ENCODE measurements at regions of chr17 and their contacts with region 1.

Region 1: DNA sequence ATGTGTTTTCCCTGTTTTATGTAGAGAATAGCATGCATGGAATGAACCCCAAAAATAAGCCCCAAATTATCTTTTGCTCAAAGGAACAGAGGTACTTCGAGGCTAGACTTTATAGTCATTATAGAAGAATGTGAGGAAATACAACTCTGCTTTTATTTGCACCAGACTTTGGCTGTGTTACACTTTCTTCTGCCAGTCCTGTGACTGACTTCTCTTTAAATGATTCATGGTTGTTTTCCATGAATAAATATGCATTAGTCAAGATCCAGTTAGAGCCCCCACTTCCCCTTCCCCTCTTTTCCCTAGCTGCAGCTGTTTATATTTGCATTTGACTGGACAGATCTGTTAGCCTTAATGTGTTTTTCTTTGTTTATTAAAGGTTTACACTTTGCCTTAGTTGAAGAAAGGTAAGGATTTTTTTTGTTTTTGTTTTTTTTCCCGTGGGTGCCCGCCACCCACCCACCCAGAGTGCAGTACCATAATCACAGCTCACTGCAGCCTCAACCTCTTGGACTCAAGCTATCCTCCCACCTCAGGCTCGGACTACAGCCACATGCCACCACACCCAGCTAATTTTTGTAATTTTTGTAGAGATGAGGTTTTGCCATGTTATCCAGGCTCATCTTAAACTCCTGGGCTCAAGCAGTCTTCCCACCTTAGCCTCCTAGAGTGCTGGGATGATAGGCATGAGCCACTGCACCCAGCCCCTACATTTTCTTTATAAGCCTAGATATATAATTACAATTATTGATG is 152.6 kb downstream of the CYB561 start:
- DNase-seq: peak; percentile 83
- ATAC-seq: peak; percentile 84
- H3K4me3 ChIP-seq: no peak overlapping the region
- H3K27ac ChIP-seq: peak overlapping the region; percentile 63
- H3K4me1 ChIP-seq: peaks cover 35% of the 10 kb centered on the region
- H3K27me3 ChIP-seq: no peaks in the 10 kb centered on the region
- CTCF ChIP-seq: no peak

Region 2: DNA sequence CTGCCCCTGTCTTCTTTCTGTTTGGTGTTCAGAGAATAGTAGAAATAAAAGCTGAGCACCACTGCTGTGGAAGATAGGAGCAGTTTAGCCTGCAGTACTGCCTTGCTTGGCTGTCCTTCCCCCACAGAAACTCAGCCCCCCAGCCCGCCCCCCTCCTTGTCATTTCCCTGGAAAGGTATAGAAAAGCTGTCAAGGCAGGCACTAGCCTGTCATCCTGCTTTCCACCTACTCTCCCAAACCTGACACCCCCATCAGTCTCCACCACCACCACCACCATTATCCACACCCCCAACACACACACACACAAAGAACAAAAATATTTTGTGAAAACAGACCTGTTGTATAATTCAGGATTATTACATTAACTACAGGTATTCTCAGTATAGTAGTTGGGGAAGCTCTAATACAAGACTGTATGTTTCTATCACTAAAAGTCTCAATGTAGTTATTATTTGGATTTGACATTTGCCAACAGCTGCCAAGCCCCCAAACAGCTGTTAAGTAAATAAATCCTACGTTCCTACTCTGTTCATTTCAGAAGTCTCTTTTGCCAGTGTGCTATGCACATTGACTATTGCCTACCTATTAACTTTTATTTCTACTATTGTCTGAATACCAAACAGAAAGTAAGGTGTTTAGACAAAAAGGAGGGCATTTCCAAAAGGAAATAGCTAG is 23.8 kb after region 1 on chr17:
- CTCF ChIA-PET with region 1: no interaction called
- POLR2A ChIA-PET with region 1: no interaction called
- intact Hi-C with region 1: no loop called
- DNase-seq: no peak
- ATAC-seq: no peak
- H3K4me3 ChIP-seq: no peak overlapping the region
- H3K27ac ChIP-seq: no peak overlapping the region
- H3K4me1 ChIP-seq: no peaks in the 10 kb centered on the region
- H3K27me3 ChIP-seq: no peaks in the 10 kb centered on the region
- CTCF ChIP-seq: no peak

Region 3: GRCh38 chr17:63332286-63332685 is 38.8 kb after region 1 on chr17:
- CTCF ChIA-PET with region 1: interaction called, 11 read pairs
- POLR2A ChIA-PET with region 1: interaction called, 4 read pairs
- intact Hi-C with region 1: loop called (anchors 5 kb)
- DNase-seq: peak; percentile 8
- ATAC-seq: no peak
- H3K4me3 ChIP-seq: no peak overlapping the region
- H3K27ac ChIP-seq: no peak overlapping the region
- H3K4me1 ChIP-seq: peaks cover 19% of the 10 kb centered on the region
- H3K27me3 ChIP-seq: no peaks in the 10 kb centered on the region
- CTCF ChIP-seq: no peak

Region 4: GRCh38 chr17:63464691-63465236 is 171.3 kb after region 1 on chr17:
- CTCF ChIA-PET with region 1: no interaction called
- POLR2A ChIA-PET with region 1: no interaction called
- intact Hi-C with region 1: no loop called
- DNase-seq: no peak
- ATAC-seq: no peak
- H3K4me3 ChIP-seq: no peak overlapping the region
- H3K27ac ChIP-seq: no peak overlapping the region
- H3K4me1 ChIP-seq: peaks cover 26% of the 10 kb centered on the region
- H3K27me3 ChIP-seq: no peaks in the 10 kb centered on the region
- CTCF ChIP-seq: no peak

Region 5: GRCh38 chr17:64773836-64774761 is 1480.6 kb after region 1 on chr17:
- CTCF ChIA-PET with region 1: no interaction called
- POLR2A ChIA-PET with region 1: no interaction called
- intact Hi-C with region 1: no loop called
- DNase-seq: peak; percentile 96
- ATAC-seq: peak; percentile 75
- H3K4me3 ChIP-seq: peak overlapping the region; percentile 74
- H3K27ac ChIP-seq: peak overlapping the region; percentile 31
- H3K4me1 ChIP-seq: peaks cover 24% of the 10 kb centered on the region
- H3K27me3 ChIP-seq: no peaks in the 10 kb centered on the region
- CTCF ChIP-seq: peak; percentile 87